GM12878 (cell line): ENCODE measurements at regions of chr1 and their contacts with region 1.

Region 1: GRCh38 chr1:7042322-7043190 is 257.3 kb downstream of the CAMTA1 start:
- DNase-seq: no peak
- ATAC-seq: peak; percentile 56
- H3K4me3 ChIP-seq: no peak overlapping the region
- H3K27ac ChIP-seq: no peak overlapping the region
- H3K4me1 ChIP-seq: no peaks in the 10 kb centered on the region
- H3K27me3 ChIP-seq: no peaks in the 10 kb centered on the region; a peak in 1 of 4 replicates
- CTCF ChIP-seq: peak; percentile 37 to 60 (median 48); a peak in 5 of 6 replicates
- EP300 ChIP-seq: no peak
- POLR2A ChIP-seq: no peak
- RAD21 ChIP-seq: peak; percentile 39

Region 2: DNA sequence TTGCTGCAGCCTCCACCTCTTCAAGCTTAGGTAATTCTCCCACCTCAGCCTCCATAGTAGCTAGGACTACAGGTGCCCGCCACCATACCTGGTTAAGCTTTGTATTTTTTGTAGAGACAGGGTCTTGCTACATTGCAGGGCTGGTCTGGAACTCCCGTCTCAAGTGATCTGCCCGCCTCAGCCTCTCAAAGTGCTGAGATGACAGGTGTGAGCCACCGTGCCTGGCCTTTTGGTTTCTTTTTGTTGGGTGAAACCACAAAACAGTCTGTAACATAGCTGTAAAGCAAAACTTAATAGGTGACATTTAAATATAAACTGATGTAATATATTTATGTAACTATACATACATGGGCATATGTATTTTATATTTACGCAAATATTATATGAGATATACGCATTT is 337.8 kb before region 1 on chr1:
- CTCF ChIA-PET with region 1: no interaction called
- POLR2A ChIA-PET with region 1: no interaction called
- RAD21 ChIA-PET with region 1: no interaction called
- SMC1A ChIA-PET with region 1: no interaction called
- in situ Hi-C with region 1: no loop called
- intact Hi-C with region 1: no loop called
- DNase-seq: no peak
- ATAC-seq: no peak
- H3K4me3 ChIP-seq: no peak overlapping the region
- H3K27ac ChIP-seq: no peak overlapping the region
- H3K4me1 ChIP-seq: peaks cover 7% of the 10 kb centered on the region
- H3K27me3 ChIP-seq: no peaks in the 10 kb centered on the region
- CTCF ChIP-seq: no peak
- EP300 ChIP-seq: no peak
- POLR2A ChIP-seq: no peak
- RAD21 ChIP-seq: no peak

Region 3: GRCh38 chr1:7070389-7071029 is 28.0 kb after region 1 on chr1:
- CTCF ChIA-PET with region 1: interaction called, 17 read pairs
- POLR2A ChIA-PET with region 1: no interaction called
- RAD21 ChIA-PET with region 1: no interaction called
- SMC1A ChIA-PET with region 1: interaction called, 3 read pairs
- in situ Hi-C with region 1: no loop called
- intact Hi-C with region 1: no loop called
- DNase-seq: peak; percentile 3
- ATAC-seq: peak; percentile 92
- H3K4me3 ChIP-seq: no peak overlapping the region
- H3K27ac ChIP-seq: no peak overlapping the region
- H3K4me1 ChIP-seq: no peaks in the 10 kb centered on the region
- H3K27me3 ChIP-seq: peaks cover 0 to 3% of the 10 kb centered on the region in 2 experiments; a peak in 1 of 4 replicates
- CTCF ChIP-seq: peak; percentile 83 to 93 (median 88)
- EP300 ChIP-seq: no peak
- POLR2A ChIP-seq: no peak
- RAD21 ChIP-seq: peak; percentile 83

Region 4: GRCh38 chr1:7218210-7218832 is 175.8 kb after region 1 on chr1:
- CTCF ChIA-PET with region 1: interaction called, 3 read pairs
- POLR2A ChIA-PET with region 1: no interaction called
- RAD21 ChIA-PET with region 1: interaction called, 3 read pairs
- SMC1A ChIA-PET with region 1: no interaction called
- in situ Hi-C with region 1: no loop called
- intact Hi-C with region 1: loop called (anchors 2 kb)
- DNase-seq: no peak
- ATAC-seq: no peak
- H3K4me3 ChIP-seq: no peak overlapping the region
- H3K27ac ChIP-seq: no peak overlapping the region
- H3K4me1 ChIP-seq: no peaks in the 10 kb centered on the region
- H3K27me3 ChIP-seq: no peaks in the 10 kb centered on the region
- CTCF ChIP-seq: peak; percentile 66 to 67 (median 67)
- EP300 ChIP-seq: no peak
- POLR2A ChIP-seq: no peak
- RAD21 ChIP-seq: peak; percentile 75

Region 5: GRCh38 chr1:7646981-7647901 is 604.7 kb after region 1 on chr1:
- CTCF ChIA-PET with region 1: interaction called, 9 read pairs
- POLR2A ChIA-PET with region 1: no interaction called
- RAD21 ChIA-PET with region 1: no interaction called
- SMC1A ChIA-PET with region 1: interaction called, 3 read pairs
- in situ Hi-C with region 1: loop called (anchors 5 kb)
- intact Hi-C with region 1: loop called (anchors 5 kb)
- DNase-seq: no peak
- ATAC-seq: peak; percentile 89
- H3K4me3 ChIP-seq: no peak overlapping the region
- H3K27ac ChIP-seq: no peak overlapping the region
- H3K4me1 ChIP-seq: peaks cover 3% of the 10 kb centered on the region; the same call in 1 of the 2 replicates
- H3K27me3 ChIP-seq: no peaks in the 10 kb centered on the region; a peak in 1 of 4 replicates
- CTCF ChIP-seq: peak; percentile 82 to 89 (median 87)
- EP300 ChIP-seq: no peak
- POLR2A ChIP-seq: no peak
- RAD21 ChIP-seq: peak; percentile 79